Activated CD4-positive, alpha-beta memory T cell treated with anti-CD3 and anti-CD28 coated beads for 36 hours (primary cell): ENCODE measurements at regions of chr9 and their contacts with region 1.

Region 1: GRCh38 chr9:122912964-122913673 is at the start of gene ZBTB6:
- DNase-seq: peak; percentile 86
- H3K4me3 Mint-ChIP-seq: peak within 1 kb of the TSS; percentile 94
- H3K27ac Mint-ChIP-seq: peak within 1 kb of the TSS; percentile 100
- H3K4me1 Mint-ChIP-seq: peaks cover 35% of the 10 kb centered on the region
- H3K27me3 Mint-ChIP-seq: no peaks in the 10 kb centered on the region
- total RNA-seq, gene ZBTB6: 9.9 to 10.6 TPM

Region 2: DNA sequence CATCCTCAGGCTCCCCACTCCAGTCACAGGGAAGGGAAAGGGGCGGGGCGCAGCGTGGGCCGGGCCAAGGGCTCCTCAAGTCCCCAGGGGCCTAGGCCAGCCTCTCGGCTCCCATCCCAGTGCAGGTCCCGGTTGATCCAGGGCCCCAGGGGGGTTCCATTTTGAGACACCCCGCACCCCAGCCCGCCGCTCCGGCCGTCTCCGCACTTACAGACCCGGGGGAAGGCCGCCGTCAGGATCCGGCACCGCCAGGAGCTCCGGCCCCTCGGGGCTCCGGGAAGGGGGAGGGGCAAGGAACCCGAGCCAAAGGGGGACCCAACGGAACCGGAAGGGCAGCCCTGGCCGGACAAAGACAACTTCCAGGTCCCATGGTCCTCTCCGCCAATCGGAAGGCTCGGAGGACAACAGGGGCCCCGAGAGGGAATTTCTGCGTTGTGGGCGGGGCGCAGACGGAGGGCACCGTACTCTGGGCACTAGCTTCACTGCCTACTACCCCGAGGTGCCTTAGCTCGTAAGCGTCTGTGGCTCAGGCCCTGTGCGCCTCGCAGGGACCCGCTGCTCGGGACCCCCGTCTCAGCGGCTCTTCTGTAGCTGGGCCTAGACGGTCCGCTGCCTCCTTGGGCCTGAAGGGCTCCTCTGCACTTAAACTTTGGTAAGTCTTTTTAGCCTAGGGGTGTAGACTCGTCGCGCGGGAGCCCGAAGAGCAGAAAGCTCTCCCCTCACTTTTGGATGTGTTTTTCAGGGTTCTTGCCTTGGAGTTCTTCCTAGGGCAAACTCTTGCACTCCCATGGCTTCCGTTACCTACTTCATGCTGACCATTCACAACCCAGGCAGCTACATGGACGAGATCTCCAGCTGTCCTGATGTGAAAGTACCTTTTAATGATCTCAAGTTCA is 18.4 kb after region 1 on chr9 and contains the start of gene ZBTB26:
- CTCF ChIA-PET with region 1: interaction called, 5 read pairs
- POLR2A ChIA-PET with region 1: interaction called, 22 read pairs
- intact Hi-C with region 1: loop called (anchors 1 kb)
- DNase-seq: peak; percentile 95
- H3K4me3 Mint-ChIP-seq: no peak within 1 kb of the TSS
- H3K27ac Mint-ChIP-seq: peak within 1 kb of the TSS; percentile 92
- H3K4me1 Mint-ChIP-seq: peaks cover 13% of the 10 kb centered on the region
- H3K27me3 Mint-ChIP-seq: no peaks in the 10 kb centered on the region
- total RNA-seq, gene ZBTB26: 6.1 to 6.4 TPM

Region 3: GRCh38 chr9:122940603-122941559 is 27.8 kb after region 1 on chr9 and contains the start of gene RABGAP1:
- CTCF ChIA-PET with region 1: no interaction called
- POLR2A ChIA-PET with region 1: interaction called, 10 read pairs
- intact Hi-C with region 1: loop called (anchors 1 kb)
- DNase-seq: peak; percentile 99
- H3K4me3 Mint-ChIP-seq: peak within 1 kb of the TSS; percentile 94
- H3K27ac Mint-ChIP-seq: peak within 1 kb of the TSS; percentile 84
- H3K4me1 Mint-ChIP-seq: peaks cover 35% of the 10 kb centered on the region
- H3K27me3 Mint-ChIP-seq: no peaks in the 10 kb centered on the region
- total RNA-seq, gene RABGAP1: 27.1 to 28.8 TPM

Region 4: GRCh38 chr9:122954253-122954691 is 41.2 kb after region 1 on chr9:
- CTCF ChIA-PET with region 1: no interaction called
- POLR2A ChIA-PET with region 1: no interaction called
- intact Hi-C with region 1: no loop called
- DNase-seq: no peak
- H3K4me3 Mint-ChIP-seq: no peak overlapping the region
- H3K27ac Mint-ChIP-seq: no peak overlapping the region
- H3K4me1 Mint-ChIP-seq: peaks cover 33% of the 10 kb centered on the region
- H3K27me3 Mint-ChIP-seq: no peaks in the 10 kb centered on the region

Region 5: DNA sequence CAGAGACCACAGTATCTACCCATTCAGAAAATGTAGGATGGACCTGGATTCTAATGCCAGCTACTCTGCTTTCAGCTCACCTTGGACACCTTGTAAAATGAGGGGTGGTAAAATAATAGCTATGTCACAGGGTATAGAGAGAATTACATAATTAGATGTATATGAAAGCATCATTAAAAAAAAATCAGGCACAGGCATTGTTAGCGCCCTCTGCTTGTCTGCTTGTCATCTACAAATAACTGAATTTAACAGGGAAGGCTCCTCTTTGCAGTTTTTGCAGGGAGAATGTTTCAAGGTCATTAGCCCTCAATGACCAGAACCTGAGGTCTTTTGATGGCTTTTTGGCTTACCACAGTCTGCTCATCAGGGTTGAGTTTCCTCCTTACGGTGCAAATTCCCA is 178.3 kb after region 1 on chr9:
- CTCF ChIA-PET with region 1: no interaction called
- POLR2A ChIA-PET with region 1: no interaction called
- intact Hi-C with region 1: no loop called
- DNase-seq: no peak
- H3K4me3 Mint-ChIP-seq: no peak overlapping the region
- H3K27ac Mint-ChIP-seq: no peak overlapping the region
- H3K4me1 Mint-ChIP-seq: no peaks in the 10 kb centered on the region
- H3K27me3 Mint-ChIP-seq: no peaks in the 10 kb centered on the region